Head of caudate nucleus (tissue), 42 donors: ENCODE measurements at regions of chr22 and their contacts with region 1.

Region 1: GRCh38 chr22:28009272-28009827 is 90.3 kb upstream of the PITPNB start:
- DNase-seq: peak; percentile 51 to 94 (median 84)

Region 2: DNA sequence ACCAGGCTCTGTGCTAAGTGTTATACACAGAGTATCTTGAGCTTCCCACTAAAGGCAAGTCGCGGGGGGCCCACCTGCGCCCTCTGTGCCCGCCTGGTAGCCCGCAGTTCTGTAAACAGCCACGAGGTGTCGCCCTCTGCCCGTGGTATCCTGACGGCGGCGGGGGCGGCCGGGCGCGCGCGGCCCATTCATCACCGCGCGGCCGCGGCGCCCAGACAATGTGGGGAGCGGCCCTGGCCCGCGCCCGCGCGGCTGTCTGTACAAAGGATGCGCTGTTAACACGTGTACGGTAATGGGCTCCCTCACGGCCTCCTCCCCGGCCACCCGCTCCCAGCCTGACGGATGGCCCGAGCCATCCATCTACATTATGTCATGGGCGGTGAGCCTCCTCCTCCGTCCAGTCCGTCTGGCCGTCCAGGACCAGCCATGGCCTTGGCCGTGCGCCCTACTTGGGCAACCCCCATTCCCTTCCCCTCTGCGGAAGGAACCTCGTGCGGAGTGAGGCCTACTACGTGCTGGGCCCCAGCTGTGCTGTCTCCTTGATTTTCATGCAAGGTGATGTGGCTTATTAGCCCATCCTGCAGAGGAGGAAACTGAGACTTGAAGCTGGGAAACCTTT is 1252.6 kb before region 1 on chr22:
- intact Hi-C with region 1: loop called (anchors 10 kb)
- DNase-seq: peak; percentile 40 to 88 (median 74)

Region 3: DNA sequence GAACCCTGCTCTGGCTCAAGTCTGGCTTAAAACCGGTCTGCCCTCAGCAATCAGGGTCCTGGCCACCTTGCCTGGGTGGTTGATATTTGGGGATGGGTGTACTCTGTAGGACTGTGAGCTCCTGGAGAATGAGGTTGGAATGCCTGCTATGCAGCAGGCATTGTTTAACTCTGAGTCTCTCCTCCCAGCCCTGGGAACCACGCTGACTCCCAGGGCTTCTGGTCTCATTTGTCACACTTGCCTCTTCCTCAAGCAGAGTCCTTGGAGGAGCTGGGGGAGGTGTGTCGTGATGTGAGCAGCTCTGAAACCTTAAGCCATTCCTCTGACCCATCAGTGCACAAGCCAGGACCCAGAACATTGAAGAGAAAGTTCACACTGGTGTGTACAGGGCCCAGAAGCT is 547.9 kb before region 1 on chr22:
- intact Hi-C with region 1: no loop called
- DNase-seq: no peak

Region 4: GRCh38 chr22:27885977-27886842 is 123.1 kb before region 1 on chr22:
- intact Hi-C with region 1: loop called (anchors 2 kb)
- DNase-seq: peak in 37 of 42 donors; percentile 23 to 86 (median 67)

Region 5: GRCh38 chr22:27919222-27919941 is 90.0 kb before region 1 on chr22 and contains the start of gene PITPNB:
- intact Hi-C with region 1: loop called (anchors 10 kb)
- DNase-seq: peak; percentile 76 to 98 (median 94)

Region 6: DNA sequence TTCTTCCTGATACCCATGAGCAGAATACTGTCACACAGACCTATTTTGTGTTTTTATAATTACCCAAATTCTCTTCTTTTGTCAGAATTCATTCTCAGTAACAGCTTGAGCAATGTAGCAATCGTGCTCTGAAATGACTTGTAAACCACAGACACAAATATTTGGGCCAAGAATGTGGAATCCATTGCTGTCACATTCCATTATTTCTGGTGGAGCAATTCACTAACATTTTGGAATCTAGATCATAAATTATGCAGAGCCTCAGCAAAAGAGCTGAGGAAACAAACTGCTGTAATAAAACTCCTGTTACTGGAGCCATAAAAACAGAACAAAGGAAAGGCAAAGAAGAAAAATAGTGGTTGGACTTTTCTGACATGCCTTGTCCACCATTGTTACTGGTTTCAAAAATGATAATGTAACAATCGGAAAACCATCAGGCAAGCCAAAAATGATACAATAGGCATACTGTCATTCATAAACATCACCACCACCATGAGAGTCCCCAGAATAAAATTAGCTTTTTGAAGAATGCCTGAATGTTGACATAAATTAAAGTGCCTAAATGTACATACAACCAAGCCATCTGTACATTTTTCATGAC is 133.1 kb after region 1 on chr22:
- intact Hi-C with region 1: no loop called
- DNase-seq: no peak

Region 7: GRCh38 chr22:28505416-28506149 is 496.2 kb after region 1 on chr22:
- intact Hi-C with region 1: no loop called
- DNase-seq: peak in 6 of 42 donors; percentile 2 to 38 (median 11)